Ascending aorta (tissue), 2 donors: ENCODE measurements at regions of chr1 and their contacts with region 1.

Region 1: GRCh38 chr1:60010690-60011089 is 62.9 kb downstream of the C1orf87 start:
- DNase-seq: no peak
- H3K4me3 ChIP-seq: no peak overlapping the region
- H3K27ac ChIP-seq: no peak overlapping the region
- H3K4me1 ChIP-seq: no peaks in the 10 kb centered on the region
- H3K27me3 ChIP-seq: no peaks in the 10 kb centered on the region
- CTCF ChIP-seq: no peak

Region 2: GRCh38 chr1:59986516-59987310 is 24.0 kb before region 1 on chr1:
- intact Hi-C with region 1: loop called (anchors 1 kb)
- DNase-seq: no peak
- H3K4me3 ChIP-seq: no peak overlapping the region
- H3K27ac ChIP-seq: no peak overlapping the region
- H3K4me1 ChIP-seq: no peaks in the 10 kb centered on the region
- H3K27me3 ChIP-seq: no peaks in the 10 kb centered on the region
- CTCF ChIP-seq: no peak